ENCODE measurements at regions of chr1 and their contacts with region 1.

Region 1: GRCh38 chr1:54996359-54996868 is 2.3 kb upstream of the BSND start:
- DNase-seq: peak; percentile 84
- ATAC-seq: peak; percentile 95
- H3K4me3 ChIP-seq: peak overlapping the region; percentile 15; the same call in 1 of the 2 replicates
- H3K27ac ChIP-seq: no peak overlapping the region
- H3K4me1 ChIP-seq: no peaks in the 10 kb centered on the region
- H3K27me3 ChIP-seq: no peaks in the 10 kb centered on the region
- CTCF ChIP-seq: peak; percentile 93

Region 2: GRCh38 chr1:54671985-54672608 is 324.3 kb before region 1 on chr1:
- CTCF ChIA-PET with region 1: no interaction called
- POLR2A ChIA-PET with region 1: no interaction called
- intact Hi-C with region 1: loop called (anchors 5 kb)
- DNase-seq: peak; percentile 76
- ATAC-seq: peak; percentile 85
- H3K4me3 ChIP-seq: no peak overlapping the region
- H3K27ac ChIP-seq: no peak overlapping the region
- H3K4me1 ChIP-seq: no peaks in the 10 kb centered on the region
- H3K27me3 ChIP-seq: 0 out of 2 replicates have a peak, but pooled peaks cover under 1% of the 10 kb centered on the region
- CTCF ChIP-seq: peak; percentile 89

Region 3: DNA sequence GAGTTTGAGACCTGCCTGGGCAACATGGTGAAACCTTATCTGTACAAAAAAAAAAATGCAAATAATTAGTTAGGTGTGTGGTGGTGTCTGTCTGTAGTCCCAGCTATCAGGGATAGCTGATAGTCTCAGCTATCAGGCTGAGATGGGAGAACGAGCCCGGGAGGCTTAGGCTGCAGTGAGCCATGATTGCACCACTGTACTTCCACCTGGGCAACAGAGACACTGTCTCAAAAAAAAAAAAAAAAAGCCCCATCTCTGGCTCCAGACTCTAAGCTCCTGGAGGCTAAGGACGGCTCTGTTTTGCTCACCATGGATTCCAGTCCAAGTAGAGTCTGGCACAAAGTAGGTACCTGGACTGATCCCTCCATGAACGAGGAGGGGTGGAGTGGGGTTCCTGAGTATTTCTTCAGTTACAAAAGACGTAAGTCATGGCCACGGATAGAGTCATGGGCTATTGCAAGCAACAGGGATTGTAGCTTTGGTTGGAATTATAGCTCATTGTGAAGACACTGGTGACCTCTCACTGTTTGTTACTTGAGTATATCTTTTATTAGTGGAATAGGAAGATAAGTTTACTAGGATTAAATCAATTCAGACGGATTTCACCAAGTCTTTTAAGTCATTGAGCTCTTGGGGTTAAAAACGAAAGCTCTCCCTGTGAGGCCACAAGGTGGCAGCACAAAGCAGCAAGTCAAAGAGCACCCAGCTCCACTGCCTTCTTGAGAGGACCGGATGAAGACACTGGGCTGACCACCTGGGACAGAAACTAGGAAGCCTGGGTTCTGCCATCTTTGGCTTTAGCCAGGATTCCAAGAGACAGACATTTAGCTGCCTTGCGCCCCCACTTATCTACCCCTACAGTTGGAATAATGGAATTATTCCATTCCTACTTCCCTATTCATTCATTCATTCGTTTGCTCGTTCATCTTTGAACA is 51.5 kb before region 1 on chr1:
- CTCF ChIA-PET with region 1: interaction called, 18 read pairs
- POLR2A ChIA-PET with region 1: no interaction called
- intact Hi-C with region 1: loop called (anchors 1 kb)
- DNase-seq: peak; percentile 89
- ATAC-seq: peak; percentile 65
- H3K4me3 ChIP-seq: no peak overlapping the region
- H3K27ac ChIP-seq: peak overlapping the region; percentile 52
- H3K4me1 ChIP-seq: peaks cover 22% of the 10 kb centered on the region
- H3K27me3 ChIP-seq: no peaks in the 10 kb centered on the region
- CTCF ChIP-seq: peak; percentile 93

Region 4: GRCh38 chr1:56229186-56229585 is 1232.8 kb after region 1 on chr1:
- CTCF ChIA-PET with region 1: no interaction called
- POLR2A ChIA-PET with region 1: no interaction called
- intact Hi-C with region 1: no loop called
- DNase-seq: no peak
- ATAC-seq: no peak
- H3K4me3 ChIP-seq: no peak overlapping the region
- H3K27ac ChIP-seq: no peak overlapping the region
- H3K4me1 ChIP-seq: 0 out of 2 replicates have a peak, but pooled peaks cover 9% of the 10 kb centered on the region
- H3K27me3 ChIP-seq: no peaks in the 10 kb centered on the region
- CTCF ChIP-seq: no peak